ENCODE measurements at regions of chr9 and their contacts with region 1.

Region 1: GRCh38 chr9:7223981-7224380 is 466.2 kb downstream of the KDM4C start:
- H3K4me3 ChIP-seq: no peak overlapping the region
- H3K27ac ChIP-seq: no peak overlapping the region
- H3K4me1 ChIP-seq: no peaks in the 10 kb centered on the region
- CTCF ChIP-seq: no peak

Region 2: DNA sequence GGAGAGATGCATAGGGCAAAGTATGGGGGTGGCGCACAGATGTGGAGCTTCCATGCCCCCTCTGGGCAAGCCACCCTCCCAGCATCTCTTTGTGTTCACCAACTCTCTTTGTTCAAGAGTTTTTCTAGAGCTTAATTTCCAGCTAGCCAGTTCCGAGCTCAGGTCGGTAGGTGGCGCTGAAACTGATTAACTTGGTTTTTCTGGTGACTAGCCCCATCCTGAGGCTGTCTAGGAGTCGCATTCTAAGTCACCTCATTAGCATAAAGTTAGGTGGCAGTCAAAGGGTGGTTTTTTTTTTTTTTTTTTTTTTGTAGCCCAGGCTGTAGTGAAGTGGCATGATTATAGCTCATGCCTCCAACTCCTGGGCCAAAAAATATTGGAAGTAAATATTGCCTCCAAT is 10.2 kb after region 1 on chr9:
- CTCF ChIA-PET with region 1: interaction called, 16 read pairs
- POLR2A ChIA-PET with region 1: no interaction called
- H3K4me3 ChIP-seq: no peak overlapping the region
- H3K27ac ChIP-seq: no peak overlapping the region
- H3K4me1 ChIP-seq: 0 out of 2 replicates have a peak, but pooled peaks cover 4% of the 10 kb centered on the region
- CTCF ChIP-seq: no peak

Region 3: DNA sequence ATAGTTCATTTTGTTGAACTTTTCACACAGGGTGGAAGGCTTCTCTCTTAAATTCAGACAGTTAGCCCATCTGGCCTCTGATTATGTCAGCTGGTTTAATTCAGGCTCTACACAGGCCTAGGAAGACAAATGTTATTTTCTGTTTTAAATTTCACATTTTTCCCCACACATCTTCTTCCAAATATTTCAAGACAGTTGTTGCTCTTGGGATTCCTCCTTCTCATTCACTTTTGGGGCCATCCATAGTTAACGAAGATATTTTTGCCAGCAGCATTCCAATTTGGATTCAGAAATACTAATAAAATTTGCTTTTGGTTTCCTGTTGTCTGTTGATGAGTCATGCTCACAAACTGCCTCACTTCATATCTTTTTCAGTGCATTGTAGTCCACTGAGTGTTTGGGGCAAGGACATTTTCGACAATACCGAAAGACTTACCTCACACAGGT is 100.2 kb after region 1 on chr9:
- CTCF ChIA-PET with region 1: no interaction called
- POLR2A ChIA-PET with region 1: no interaction called
- H3K4me3 ChIP-seq: no peak overlapping the region
- H3K27ac ChIP-seq: no peak overlapping the region
- H3K4me1 ChIP-seq: no peaks in the 10 kb centered on the region
- CTCF ChIP-seq: no peak

Measured in HEK293 (cell line).